Activated T-helper 2 cell treated with anti-CD3 and anti-CD28 coated beads, Interferon-gamma antibody, Interleukin-2, Interleukin-4, amounts not matched to agents 10 μg/mL and 5 μg/mL and 100 μg/mL, durations not matched to agents 14 hours and 24 hours and 36 hours (primary cell): ENCODE measurements at regions of chr11 and their contacts with region 1.

Region 1: DNA sequence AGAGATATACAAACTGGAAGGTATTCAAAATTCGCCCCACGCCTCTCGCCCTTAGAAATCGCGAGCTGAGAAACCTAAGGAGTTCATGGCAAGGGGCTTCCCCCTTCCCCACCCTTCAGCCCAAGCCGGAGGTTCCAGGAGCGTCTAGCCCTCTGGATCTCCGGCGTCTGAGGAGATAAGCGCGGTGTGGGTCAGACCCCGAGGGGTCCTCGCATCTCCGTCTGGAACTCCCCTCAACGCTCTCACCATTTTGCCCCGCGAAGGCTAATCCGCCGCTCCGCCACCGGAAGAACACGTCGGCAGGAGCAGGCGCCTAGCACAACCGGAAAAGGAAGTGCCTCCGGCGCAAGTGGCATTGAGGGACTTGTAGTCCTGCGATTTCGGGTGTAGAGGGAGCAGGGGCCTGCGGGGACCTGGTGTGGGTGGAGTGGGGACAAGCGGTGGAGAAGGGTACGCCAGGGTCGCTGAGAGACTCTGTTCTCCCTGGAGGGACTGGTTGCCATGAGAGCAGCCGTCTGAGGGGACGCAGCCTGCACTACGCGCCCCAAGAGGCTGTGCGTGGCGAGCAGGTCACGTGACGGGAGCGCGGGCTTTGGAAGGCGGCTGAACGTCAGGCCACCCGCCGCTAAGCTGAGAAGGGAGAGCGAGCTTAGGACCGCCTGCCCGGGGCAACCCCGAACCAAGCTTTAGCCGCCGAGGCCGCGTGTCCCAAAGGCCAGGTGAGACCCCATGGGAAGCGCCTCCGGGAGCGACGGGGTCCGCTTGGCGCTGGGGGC is at the starts of genes FEN1 and TMEM258:
- DNase-seq: peak; percentile 87
- H3K4me3 Mint-ChIP-seq: peak within 1 kb of the TSS; percentile 98
- H3K27ac Mint-ChIP-seq: peak within 1 kb of the TSS; percentile 99
- H3K4me1 Mint-ChIP-seq: peaks cover 45% of the 10 kb centered on the region
- H3K27me3 Mint-ChIP-seq: no peaks in the 10 kb centered on the region
- total RNA-seq, gene FEN1: 130 and 131 TPM in 2 replicates
- total RNA-seq, gene TMEM258: 187 and 192 TPM in 2 replicates

Region 2: GRCh38 chr11:61482513-61482912 is 310.0 kb before region 1 on chr11:
- intact Hi-C with region 1: no loop called
- DNase-seq: no peak
- H3K4me3 Mint-ChIP-seq: no peak overlapping the region
- H3K27ac Mint-ChIP-seq: no peak overlapping the region
- H3K4me1 Mint-ChIP-seq: peaks cover 3% of the 10 kb centered on the region
- H3K27me3 Mint-ChIP-seq: no peaks in the 10 kb centered on the region

Region 3: GRCh38 chr11:61827571-61828378 is 35.3 kb after region 1 on chr11 and contains the start of gene FADS2:
- intact Hi-C with region 1: loop called (anchors 1 kb)
- DNase-seq: peak; percentile 91
- H3K4me3 Mint-ChIP-seq: peak within 1 kb of the TSS; percentile 97
- H3K27ac Mint-ChIP-seq: peak within 1 kb of the TSS; percentile 95
- H3K4me1 Mint-ChIP-seq: peaks cover 44% of the 10 kb centered on the region
- H3K27me3 Mint-ChIP-seq: no peaks in the 10 kb centered on the region
- total RNA-seq, gene FADS2: 366 and 381 TPM in 2 replicates

Region 4: GRCh38 chr11:61891331-61892084 is 99.0 kb after region 1 on chr11 and contains the start of gene FADS3:
- intact Hi-C with region 1: loop called (anchors 5 kb)
- DNase-seq: peak; percentile 50
- H3K4me3 Mint-ChIP-seq: peak within 1 kb of the TSS; percentile 84
- H3K27ac Mint-ChIP-seq: no peak within 1 kb of the TSS
- H3K4me1 Mint-ChIP-seq: no peaks in the 10 kb centered on the region
- H3K27me3 Mint-ChIP-seq: no peaks in the 10 kb centered on the region
- total RNA-seq, gene FADS3: 22.1 and 24.1 TPM in 2 replicates

Region 5: GRCh38 chr11:62081378-62082291 is 289.1 kb after region 1 on chr11:
- intact Hi-C with region 1: loop called (anchors 1 kb)
- DNase-seq: peak; percentile 65
- H3K4me3 Mint-ChIP-seq: no peak overlapping the region
- H3K27ac Mint-ChIP-seq: no peak overlapping the region
- H3K4me1 Mint-ChIP-seq: peaks cover 6% of the 10 kb centered on the region
- H3K27me3 Mint-ChIP-seq: peaks cover 2% of the 10 kb centered on the region